ENCODE measurements at regions of chr6 and their contacts with region 1.

Region 1: DNA sequence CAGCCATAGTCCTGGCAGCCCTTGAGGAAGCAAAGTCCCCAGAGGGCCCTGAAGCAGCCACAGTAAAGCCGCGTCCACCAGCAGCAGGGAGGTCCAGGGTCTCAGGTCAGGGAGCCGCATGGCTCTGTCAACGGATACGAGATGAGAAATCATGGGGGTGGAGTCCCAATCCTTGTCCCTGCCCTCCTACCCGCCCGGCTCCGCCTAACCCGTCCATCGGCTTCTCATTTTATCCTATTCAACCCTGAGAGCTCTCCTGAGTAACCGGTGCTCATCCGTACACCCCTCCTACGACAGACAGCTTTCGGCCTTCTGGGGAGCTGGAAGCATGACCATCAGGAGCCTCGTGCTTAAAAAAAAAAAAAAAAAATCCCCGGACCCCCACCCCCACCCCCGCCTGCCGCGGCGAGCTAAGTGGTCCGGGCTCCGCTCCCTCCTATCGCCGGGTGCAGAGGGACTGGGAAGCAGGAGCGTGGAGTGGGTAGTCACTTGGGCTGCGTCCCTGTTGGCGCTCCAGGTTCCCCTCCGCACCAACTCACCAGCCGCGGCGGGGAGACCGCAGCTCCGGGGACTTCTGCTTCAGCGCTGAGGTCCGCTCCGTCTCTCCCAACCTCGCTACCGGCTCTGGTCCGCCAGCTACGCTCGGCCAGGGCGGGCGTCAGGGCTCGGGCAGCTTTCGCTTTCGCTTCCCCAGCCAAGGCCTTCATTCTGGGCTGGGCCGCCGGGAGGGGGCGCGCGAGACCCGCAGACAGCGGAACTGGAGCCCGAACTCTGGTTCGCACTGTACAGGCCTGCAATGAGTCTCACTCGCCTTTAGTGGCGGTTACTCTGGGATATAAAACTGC is at the start of gene TAP2:
- H3K4me3 ChIP-seq: peak within 1 kb of the TSS; percentile 87
- H3K27ac ChIP-seq: peak within 1 kb of the TSS; percentile 67
- H3K4me1 ChIP-seq: 0 out of 2 replicates have a peak, but pooled peaks cover 3% of the 10 kb centered on the region
- CTCF ChIP-seq: peak; percentile 96

Region 2: DNA sequence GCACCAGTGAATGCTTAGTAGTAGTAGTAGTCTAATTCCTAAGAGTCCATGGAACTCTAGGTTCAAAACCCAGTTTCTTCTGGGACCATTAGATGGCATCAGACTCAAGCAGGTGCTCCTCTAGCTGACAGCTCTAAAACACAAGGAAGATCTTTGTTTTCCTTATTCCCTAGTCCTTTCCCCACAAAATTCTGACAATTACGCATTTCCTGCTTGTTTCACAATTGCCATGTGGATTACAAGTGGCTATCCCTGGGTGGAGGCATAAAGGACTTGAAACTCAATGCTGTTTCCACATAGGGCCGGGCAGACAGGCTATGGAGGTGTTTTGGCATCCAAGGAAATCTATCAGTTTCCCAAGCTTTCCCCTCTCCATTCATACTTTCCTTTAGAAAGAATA is 12.4 kb before region 1 on chr6:
- CTCF ChIA-PET with region 1: interaction called, 107 read pairs
- POLR2A ChIA-PET with region 1: interaction called, 13 read pairs
- H3K4me3 ChIP-seq: no peak overlapping the region
- H3K27ac ChIP-seq: no peak overlapping the region
- H3K4me1 ChIP-seq: no peaks in the 10 kb centered on the region
- CTCF ChIP-seq: peak; percentile 51; the same call in 1 of the 2 replicates

Region 3: GRCh38 chr6:32860674-32861073 is 22.3 kb after region 1 on chr6:
- CTCF ChIA-PET with region 1: interaction called, 355 read pairs
- POLR2A ChIA-PET with region 1: interaction called, 9 read pairs
- H3K4me3 ChIP-seq: no peak overlapping the region
- H3K27ac ChIP-seq: no peak overlapping the region
- H3K4me1 ChIP-seq: no peaks in the 10 kb centered on the region
- CTCF ChIP-seq: no peak

Region 4: GRCh38 chr6:32894080-32895005 is 56.0 kb after region 1 on chr6:
- CTCF ChIA-PET with region 1: interaction called, 10 read pairs
- POLR2A ChIA-PET with region 1: interaction called, 19 read pairs
- H3K4me3 ChIP-seq: peak overlapping the region; percentile 66
- H3K27ac ChIP-seq: peak overlapping the region; percentile 96
- H3K4me1 ChIP-seq: peaks cover 5% of the 10 kb centered on the region
- CTCF ChIP-seq: peak; percentile 52; the same call in 1 of the 2 replicates

Region 5: GRCh38 chr6:32940656-32941213 is 102.4 kb after region 1 on chr6 and contains the start of gene HLA-DMB:
- CTCF ChIA-PET with region 1: interaction called, 13 read pairs
- POLR2A ChIA-PET with region 1: no interaction called
- H3K4me3 ChIP-seq: peak within 1 kb of the TSS; percentile 57
- H3K27ac ChIP-seq: no peak within 1 kb of the TSS
- H3K4me1 ChIP-seq: no peaks in the 10 kb centered on the region
- CTCF ChIP-seq: no peak

Region 6: GRCh38 chr6:32952817-32953739 is 114.7 kb after region 1 on chr6 and contains the start of gene HLA-DMA:
- CTCF ChIA-PET with region 1: interaction called, 22 read pairs
- POLR2A ChIA-PET with region 1: interaction called, 3 read pairs
- H3K4me3 ChIP-seq: no peak within 1 kb of the TSS
- H3K27ac ChIP-seq: no peak within 1 kb of the TSS
- H3K4me1 ChIP-seq: no peaks in the 10 kb centered on the region
- CTCF ChIP-seq: 0 out of 2 replicates have a peak, but pooled peaks have one; percentile 31